Right ventricle myocardium superior (tissue), 1 donor: ENCODE measurements at regions of chr2 and their contacts with region 1.

Region 1: GRCh38 chr2:207746131-207746530 is 23.6 kb downstream of the FZD5 start:
- DNase-seq: peak; percentile 56
- ATAC-seq: peak; percentile 89

Region 2: DNA sequence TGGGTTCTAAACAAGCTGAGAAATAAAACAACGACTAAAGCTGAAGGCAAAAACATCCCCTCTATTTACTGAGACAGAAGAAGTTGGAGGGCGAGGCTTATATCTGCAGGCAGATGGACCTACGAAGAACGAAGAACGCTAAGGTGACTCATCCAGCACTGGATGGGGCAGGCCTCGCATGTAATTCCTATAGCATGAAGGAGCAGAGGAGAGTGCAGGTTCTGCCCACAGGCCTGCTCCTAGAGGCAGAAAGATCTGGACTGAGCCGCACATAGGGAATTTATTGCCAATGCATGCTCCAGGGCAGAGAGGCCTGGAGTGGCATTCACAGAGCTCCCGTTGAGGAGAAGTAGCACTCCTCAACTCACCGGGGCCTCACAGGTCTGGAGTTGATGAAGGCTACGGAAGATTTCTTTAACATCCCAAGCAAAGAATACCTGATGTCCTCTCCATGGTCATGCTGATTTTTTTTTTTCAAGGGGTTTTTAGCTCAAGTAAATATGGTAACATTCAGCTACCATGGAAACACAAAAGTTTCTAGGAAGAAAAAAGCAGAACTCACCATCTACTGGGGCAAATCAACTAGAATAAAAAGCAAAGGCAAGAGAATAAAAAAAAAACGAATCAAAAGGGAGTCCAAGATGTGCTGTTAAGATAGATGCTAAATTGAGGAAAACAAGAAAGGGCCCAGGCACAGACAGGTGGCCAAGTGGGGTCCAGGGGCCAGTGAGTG is 110.5 kb before region 1 on chr2:
- intact Hi-C with region 1: no loop called
- DNase-seq: no peak
- ATAC-seq: no peak

Region 3: GRCh38 chr2:207974216-207974605 is 228.1 kb after region 1 on chr2:
- intact Hi-C with region 1: loop called (anchors 5 kb)
- DNase-seq: no peak
- ATAC-seq: no peak

Region 4: DNA sequence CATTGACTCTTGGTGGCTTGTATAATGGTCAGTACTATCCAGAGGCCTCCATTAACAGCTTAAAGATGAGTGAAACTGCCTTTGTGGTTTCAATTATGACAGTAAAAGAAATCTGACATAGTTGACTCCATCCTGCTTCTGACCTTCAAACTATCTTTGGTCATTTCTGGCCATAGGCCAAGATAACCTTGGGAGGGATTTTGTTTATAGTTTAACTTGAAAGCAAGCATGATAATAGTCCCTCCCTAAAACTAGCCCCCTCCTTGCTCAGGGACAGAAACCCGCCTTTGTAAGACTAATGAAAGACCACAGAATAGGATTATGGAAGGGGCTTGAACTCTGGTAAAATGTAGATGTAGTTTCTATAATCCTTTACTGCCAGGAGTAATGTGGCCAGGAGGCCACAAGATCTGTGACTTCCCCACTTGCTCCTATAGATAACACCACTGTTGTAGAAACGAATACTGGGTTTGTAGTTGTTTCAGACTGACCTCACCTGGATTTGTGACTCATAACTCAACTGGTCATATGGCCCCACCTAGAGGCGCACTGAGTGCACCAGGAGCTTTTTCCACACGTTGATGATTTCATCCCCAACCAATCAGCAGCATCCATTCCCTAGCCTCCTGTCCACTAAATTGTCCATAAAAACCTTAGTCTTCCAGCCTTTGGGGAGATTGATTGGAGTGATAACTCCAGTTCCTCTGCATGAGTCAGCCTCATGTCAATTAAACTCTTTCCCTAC is 287.8 kb after region 1 on chr2:
- intact Hi-C with region 1: loop called (anchors 5 kb)
- DNase-seq: no peak
- ATAC-seq: peak; percentile 79